ENCODE measurements at regions of chr12 and their contacts with region 1.

Region 1: DNA sequence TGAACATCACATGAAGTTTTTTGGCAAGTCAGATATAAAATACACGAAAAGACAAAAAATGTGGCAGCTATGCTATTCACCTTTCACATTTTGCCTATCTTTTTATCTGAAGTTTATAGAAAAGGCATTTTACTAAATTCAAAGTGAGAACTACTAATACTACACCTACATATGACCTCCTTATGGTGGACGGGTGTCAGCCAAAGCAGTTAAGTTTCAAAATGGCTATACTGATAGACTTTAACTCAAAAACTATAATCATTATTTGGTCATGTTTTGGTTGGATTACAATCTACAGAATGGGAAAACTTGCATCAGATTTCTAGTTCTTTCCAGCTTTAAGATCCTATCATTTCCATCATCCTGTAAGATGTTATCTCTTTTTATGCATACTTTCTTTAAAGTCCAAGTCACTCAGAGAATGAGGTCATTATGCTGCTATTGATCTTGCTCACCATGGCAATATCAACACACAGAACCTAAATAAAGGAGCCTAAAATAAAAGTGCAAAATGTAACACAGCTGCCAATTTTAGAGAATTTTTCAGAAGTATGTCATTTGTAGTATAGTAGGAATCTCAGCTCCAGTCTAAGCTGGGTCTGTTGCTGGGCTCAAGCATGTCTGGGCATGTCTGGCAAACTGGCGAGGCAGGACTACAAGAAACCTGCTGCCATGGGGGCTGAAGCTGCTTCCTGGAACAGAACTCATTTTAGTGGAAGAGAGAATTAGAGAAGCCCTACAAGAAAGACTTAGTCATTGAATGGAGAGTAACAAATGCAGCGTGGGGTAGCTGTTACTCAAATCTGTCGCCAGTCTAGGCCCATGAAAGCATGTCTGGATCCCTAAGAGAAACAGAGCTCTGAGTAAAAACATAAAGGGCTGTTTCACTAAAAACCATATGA is 7.6 kb upstream of the AEBP2 start:
- DNase-seq: peak; percentile 83
- H3K4me3 Mint-ChIP-seq: peak overlapping the region; percentile 38
- H3K27ac Mint-ChIP-seq: peak overlapping the region; percentile 99
- H3K4me1 Mint-ChIP-seq: peaks cover 39% of the 10 kb centered on the region
- H3K27me3 Mint-ChIP-seq: no peaks in the 10 kb centered on the region

Region 2: GRCh38 chr12:18146363-18146762 is 1285.3 kb before region 1 on chr12:
- intact Hi-C with region 1: no loop called
- DNase-seq: no peak
- H3K4me3 Mint-ChIP-seq: no peak overlapping the region
- H3K27ac Mint-ChIP-seq: no peak overlapping the region
- H3K4me1 Mint-ChIP-seq: no peaks in the 10 kb centered on the region
- H3K27me3 Mint-ChIP-seq: no peaks in the 10 kb centered on the region

Region 3: GRCh38 chr12:19382111-19382526 is 49.5 kb before region 1 on chr12:
- intact Hi-C with region 1: loop called (anchors 1 kb)
- DNase-seq: peak; percentile 75
- H3K4me3 Mint-ChIP-seq: no peak overlapping the region
- H3K27ac Mint-ChIP-seq: peak overlapping the region; percentile 34
- H3K4me1 Mint-ChIP-seq: peaks cover 6% of the 10 kb centered on the region
- H3K27me3 Mint-ChIP-seq: no peaks in the 10 kb centered on the region

Region 4: DNA sequence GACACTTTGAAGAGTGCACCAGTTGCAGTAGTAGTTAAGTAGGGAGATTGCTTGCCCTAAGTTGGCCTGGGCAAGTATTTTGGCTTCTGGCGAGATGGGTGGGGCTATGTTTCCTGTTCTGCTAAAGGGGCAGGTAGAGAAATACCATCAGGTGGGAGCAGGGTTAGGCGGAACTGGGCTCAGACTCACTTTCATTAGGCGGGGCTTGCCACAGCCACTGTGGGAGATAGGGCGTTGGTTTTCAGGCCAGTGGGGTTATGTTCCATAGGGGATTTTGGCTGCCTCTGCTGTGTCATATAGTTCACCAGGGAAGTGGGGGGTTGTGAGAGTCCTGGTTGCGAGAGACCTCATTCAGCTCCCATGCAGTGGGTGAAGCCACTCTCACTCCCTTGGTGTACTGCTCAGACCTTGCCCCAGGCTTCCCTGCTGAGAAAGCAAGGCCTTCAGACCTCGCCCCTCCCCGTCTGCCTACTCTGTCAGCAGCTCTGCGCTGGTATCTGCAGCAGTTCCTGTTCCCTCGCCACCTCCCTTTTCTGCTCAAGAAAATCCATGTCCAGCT is 51.0 kb after region 1 on chr12:
- intact Hi-C with region 1: loop called (anchors 1 kb)
- DNase-seq: peak; percentile 72
- H3K4me3 Mint-ChIP-seq: peak overlapping the region; percentile 39
- H3K27ac Mint-ChIP-seq: peak overlapping the region; percentile 74
- H3K4me1 Mint-ChIP-seq: peaks cover 44% of the 10 kb centered on the region
- H3K27me3 Mint-ChIP-seq: no peaks in the 10 kb centered on the region

Region 5: GRCh38 chr12:19553175-19553574 is 121.5 kb after region 1 on chr12:
- intact Hi-C with region 1: loop called (anchors 5 kb)
- DNase-seq: no peak
- H3K4me3 Mint-ChIP-seq: no peak overlapping the region
- H3K27ac Mint-ChIP-seq: no peak overlapping the region
- H3K4me1 Mint-ChIP-seq: peaks cover 10% of the 10 kb centered on the region
- H3K27me3 Mint-ChIP-seq: no peaks in the 10 kb centered on the region

Region 6: DNA sequence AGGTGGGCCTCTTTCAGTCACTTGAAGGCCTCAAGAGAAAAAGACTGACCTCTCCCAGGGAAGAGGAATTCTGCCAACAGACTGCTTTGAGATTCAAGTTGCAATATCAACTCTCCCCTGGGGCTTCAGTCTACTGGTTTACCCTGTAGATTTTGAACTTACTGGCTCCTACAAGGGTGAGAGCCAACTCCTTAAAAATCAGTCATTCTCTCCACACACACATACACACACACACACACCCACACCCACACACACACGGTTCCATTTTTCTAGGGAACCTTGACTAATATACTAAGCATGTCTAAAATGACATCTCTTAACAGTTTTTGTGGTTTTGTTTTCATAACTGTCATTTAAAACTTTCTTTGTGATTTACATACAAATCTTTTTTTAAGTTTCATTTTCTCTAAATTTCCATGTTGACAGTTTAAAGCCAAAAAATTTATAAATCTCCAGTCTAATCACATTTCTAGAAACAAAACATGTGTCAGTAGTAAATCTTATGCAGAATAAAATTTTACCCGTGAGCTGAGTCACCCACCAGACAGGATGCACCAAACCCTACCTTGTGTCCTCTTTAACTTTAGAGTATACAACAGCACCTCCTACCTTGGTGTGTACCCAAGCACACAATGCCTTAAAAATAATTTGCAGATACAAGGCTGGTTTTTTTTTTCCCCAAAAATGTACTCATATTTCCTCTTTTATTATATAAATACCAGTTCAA is 402.3 kb after region 1 on chr12:
- intact Hi-C with region 1: loop called (anchors 5 kb)
- DNase-seq: no peak
- H3K4me3 Mint-ChIP-seq: no peak overlapping the region
- H3K27ac Mint-ChIP-seq: peak overlapping the region; percentile 71
- H3K4me1 Mint-ChIP-seq: peaks cover 8% of the 10 kb centered on the region
- H3K27me3 Mint-ChIP-seq: no peaks in the 10 kb centered on the region

Measured in activated CD4-positive, alpha-beta T cell treated with anti-CD3 and anti-CD28 coated beads, Interleukin-2, amount 10 ng/mL, durations not matched to agents 24 days and 14 days (primary cell).